Dorsolateral prefrontal cortex (tissue), 120 donors: ENCODE measurements at regions of chr9 and their contacts with region 1.

Region 1: DNA sequence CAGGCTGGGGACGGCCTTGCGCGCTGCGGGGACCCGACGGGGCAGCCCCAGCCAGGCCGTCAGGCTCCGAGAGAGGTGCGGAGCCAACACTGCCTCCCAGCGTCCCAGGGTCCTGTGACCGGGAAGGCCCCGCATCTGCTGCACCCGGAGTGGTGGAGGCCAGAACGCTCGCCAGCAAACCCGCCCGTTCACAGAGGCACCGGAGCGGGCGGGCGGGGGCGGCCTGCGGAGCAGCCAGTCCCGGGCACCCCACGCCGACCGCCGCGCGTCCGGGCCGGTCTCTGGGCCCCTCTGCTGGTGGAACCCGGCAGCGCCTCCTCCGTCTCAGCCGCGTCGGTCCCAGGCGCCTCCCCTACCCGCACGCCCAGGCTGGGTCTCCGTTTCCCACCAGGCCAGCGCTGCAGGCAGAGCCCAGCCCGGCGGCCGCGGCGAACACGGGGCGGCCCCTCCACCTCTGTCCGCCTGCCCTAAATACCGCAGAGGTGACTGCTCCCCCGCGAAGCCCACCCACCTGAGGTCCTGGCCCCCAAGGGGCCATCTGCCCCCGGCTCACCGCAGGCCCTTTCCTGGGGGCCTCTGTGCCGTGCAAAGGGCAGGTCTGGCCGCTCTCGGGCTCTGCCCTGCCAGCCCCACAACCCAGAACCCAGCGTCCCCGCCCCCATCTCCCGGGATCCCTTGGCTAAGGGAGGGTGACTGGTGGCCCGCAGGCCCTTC is 15.9 kb downstream of the EXD3 start:
- DNase-seq: peak in 8 of 10 donors; percentile 44 to 81 (median 61)
- H3K4me3 ChIP-seq: peak overlapping the region; percentile 28 to 68 (median 52)
- H3K27ac ChIP-seq: peak overlapping the region in 53 of 59 donors; percentile 36 to 91 (median 76)
- H3K27me3 ChIP-seq: no peaks in the 10 kb centered on the region
- CTCF ChIP-seq: peak; percentile 21 to 92 (median 78)

Region 2: GRCh38 chr9:137114610-137115391 is 292.2 kb before region 1 on chr9 and contains the start of gene DPP7:
- intact Hi-C with region 1: loop called in 1 of 2 experiments (anchors 10 kb)
- DNase-seq: peak; percentile 66 to 90 (median 76)
- H3K4me3 ChIP-seq: peak within 1 kb of the TSS; percentile 52 to 93 (median 81)
- H3K27ac ChIP-seq: peak within 1 kb of the TSS in 55 of 59 donors; percentile 24 to 90 (median 76)
- H3K27me3 ChIP-seq: no peaks in the 10 kb centered on the region
- CTCF ChIP-seq: peak in 17 of 56 donors; percentile 7 to 47 (median 20)
- total RNA-seq, gene DPP7: 156 to 315 (median 208) TPM

Region 3: DNA sequence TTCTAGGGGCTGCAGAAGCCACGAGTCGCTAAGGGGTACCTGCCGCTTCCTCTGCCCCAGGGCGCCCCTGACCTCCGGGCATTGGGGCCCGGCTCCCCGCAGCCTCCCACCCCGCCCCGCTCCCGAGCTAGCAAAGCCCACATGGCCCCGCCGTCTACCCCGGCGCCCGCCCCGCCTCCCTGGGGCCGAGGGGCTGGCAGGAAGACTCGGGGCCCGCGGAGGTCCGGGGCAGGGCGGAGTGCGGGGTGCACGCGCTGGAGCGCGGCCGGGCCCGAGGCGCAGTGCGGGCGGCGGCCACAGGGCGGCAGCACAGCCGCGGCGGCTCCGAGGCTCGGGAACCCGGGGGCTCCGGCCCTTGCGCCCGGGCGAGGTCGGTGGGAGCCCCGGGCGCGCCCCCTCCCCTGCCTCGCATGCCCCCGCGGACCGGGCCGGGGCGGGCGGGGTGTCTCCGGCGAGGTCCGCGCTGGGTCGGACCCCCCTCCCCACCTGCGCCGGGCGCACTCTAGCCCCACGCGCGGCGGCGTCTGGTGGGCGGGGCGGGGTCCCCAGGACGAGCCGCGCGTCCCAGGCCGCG is 111.7 kb before region 1 on chr9:
- intact Hi-C with region 1: loop called (anchors 2 to 5 kb)
- DNase-seq: no peak
- H3K4me3 ChIP-seq: peak overlapping the region in 45 of 59 donors; percentile 6 to 58 (median 37)
- H3K27ac ChIP-seq: no peak overlapping the region
- H3K27me3 ChIP-seq: peaks cover 0 to 61% (median 15%) of the 10 kb centered on the region in 45 donors
- CTCF ChIP-seq: peak in 43 of 56 donors; percentile 10 to 83 (median 54)